Activated T-helper 2 cell treated with anti-CD3 and anti-CD28 coated beads, Interferon-gamma antibody, Interleukin-2, Interleukin-4, amounts not matched to agents 10 μg/mL and 5 μg/mL and 100 μg/mL, durations not matched to agents 14 hours and 24 hours and 36 hours (primary cell): ENCODE measurements at regions of chr11 and their contacts with region 1.

Region 1: DNA sequence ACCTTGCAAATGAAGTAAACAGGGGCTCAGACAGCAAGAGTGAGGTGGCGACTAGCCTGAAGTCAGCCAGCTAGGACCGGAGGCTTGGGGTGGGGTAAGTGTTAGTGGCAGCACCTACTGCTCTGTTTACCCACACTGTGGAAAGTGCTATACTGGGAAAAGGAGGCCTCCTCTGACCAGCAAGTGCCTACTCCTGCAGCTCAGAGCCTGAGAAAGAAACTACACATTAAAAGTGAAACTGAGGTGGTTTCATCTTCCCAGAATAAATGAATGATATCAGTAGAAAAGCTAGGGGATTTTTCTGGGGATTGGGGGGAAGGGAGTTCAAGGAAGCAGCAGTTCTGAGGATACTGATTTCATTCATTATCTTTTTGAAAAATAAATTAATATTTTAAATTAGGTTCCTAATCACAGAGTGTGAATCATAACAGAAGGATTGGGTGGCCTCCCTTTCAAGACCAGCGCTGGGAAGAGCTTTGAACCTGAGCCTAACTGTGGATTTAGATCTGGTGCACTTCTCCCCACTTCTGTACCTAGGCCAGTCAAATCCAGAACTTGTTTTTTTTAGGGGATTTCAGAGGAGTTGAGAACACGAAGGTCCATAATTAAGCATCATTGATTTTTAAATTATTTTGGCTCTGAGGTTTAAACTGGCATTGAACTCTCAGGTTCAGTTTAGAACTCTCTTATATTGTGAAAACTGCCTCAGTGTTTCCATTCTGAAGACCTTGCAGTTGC is 48.1 kb upstream of the GRAMD1B start:
- DNase-seq: peak; percentile 47
- H3K4me3 Mint-ChIP-seq: peak overlapping the region; percentile 59
- H3K27ac Mint-ChIP-seq: peak overlapping the region; percentile 50
- H3K4me1 Mint-ChIP-seq: peaks cover 28% of the 10 kb centered on the region
- H3K27me3 Mint-ChIP-seq: no peaks in the 10 kb centered on the region

Region 2: DNA sequence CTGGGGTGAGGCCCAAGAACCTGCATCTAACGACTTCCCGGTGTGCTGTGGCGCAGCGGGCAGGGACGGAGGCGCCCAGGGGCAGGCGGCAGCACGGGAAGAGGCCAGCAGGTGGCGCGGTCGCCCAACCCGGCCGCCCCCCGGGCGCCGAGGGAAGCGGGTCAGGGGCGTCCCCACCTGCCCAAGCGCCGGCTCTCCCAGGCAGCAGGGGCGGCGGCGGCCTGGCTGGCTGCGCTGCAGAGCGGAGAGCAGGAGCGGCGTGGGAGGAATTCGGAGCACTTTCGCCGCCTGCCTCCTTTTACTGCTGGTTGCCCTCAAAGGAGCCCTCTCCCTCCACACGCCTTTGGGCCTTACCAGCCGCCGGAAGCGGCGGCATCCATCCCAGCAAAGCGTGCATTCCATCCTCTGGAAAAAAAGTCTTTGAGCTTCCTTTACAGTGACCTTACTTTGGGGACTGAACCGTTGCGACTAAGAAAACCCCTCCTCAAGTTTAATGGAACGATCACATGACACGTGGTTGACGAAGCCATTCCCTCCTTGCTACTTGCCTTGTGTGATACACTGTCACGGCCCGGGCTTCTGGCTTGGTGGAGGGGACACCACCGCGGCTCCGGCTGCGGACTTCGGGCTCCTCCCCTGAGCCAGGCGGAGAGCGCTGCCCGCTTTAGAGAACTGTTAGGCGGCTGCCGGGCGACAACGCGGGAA is 80.1 kb before region 1 on chr11:
- intact Hi-C with region 1: loop called (anchors 1 kb)
- DNase-seq: peak; percentile 67
- H3K4me3 Mint-ChIP-seq: peak overlapping the region; percentile 58
- H3K27ac Mint-ChIP-seq: peak overlapping the region; percentile 84
- H3K4me1 Mint-ChIP-seq: peaks cover 45% of the 10 kb centered on the region
- H3K27me3 Mint-ChIP-seq: peaks cover 2% of the 10 kb centered on the region

Region 3: DNA sequence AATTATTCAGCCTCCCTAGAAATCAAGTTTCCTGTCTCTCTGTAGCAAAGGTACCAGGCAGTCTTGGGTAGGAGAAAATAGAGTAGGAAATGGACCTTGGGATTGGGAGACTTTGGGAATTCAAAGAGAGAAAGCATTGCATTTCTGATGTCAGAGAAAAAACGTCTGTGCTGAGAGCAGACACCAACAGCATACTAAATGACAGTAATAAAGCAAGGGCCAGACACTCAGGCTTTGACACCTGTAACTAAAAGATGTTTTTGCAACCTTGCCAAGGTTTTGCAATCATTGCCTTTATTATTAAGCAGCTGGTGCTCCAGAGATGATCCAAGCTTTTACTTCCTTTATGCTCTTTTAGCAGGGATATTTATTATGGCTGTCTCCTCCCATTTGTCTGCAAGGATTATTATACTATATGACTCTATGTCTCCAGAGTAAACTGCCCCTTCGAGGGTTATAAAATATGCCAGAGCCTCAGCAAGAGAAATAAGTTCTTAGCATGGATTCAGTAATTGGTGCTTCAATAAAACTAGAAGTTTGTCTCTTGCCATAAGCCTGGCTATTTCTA is 37.1 kb before region 1 on chr11:
- intact Hi-C with region 1: no loop called
- DNase-seq: no peak
- H3K4me3 Mint-ChIP-seq: no peak overlapping the region
- H3K27ac Mint-ChIP-seq: no peak overlapping the region
- H3K4me1 Mint-ChIP-seq: peaks cover 4% of the 10 kb centered on the region
- H3K27me3 Mint-ChIP-seq: peaks cover 1% of the 10 kb centered on the region

Region 4: DNA sequence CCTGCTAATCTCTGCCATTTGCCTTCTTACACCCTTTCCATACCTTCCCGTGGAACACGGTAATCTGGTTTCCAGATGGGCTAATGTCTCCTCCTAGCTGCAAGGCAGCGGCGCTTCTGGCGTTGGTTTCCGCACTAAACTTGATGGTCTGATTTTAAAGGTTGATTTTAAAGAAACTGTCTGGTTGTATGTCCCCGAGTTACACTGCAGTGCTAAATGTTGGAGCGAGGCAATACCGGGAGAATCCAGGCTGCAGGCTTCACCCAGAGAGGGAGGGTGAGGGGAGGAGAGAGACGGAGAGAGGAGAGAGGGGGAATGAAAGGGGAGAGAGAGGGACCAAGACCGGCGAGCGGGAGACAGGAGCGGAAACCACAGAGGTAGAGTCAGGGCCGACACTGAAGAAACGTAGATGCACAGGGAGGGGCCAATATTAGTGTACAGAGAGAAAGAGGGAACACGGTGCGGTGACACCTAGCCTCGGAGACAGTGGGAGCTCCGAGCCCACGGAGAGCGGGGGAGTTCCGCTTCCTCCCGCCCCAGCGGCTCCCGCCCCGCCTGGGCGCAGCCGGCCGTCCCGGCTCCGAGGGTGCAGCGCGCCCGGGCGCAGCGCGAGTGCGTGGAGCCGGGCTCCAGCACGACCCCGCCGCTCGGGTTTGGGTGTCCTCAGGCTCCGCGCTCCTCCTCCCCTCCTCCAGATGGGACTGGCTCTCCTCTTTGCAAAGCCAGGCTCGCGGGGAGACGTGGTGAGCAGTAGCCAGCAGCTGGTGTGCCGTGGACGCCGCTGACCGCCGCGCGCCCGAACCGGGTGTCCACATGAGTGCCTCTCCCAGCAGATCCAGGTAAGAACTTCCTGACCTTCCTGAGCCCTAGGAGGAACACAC is 23.8 kb before region 1 on chr11:
- intact Hi-C with region 1: loop called (anchors 1 kb)
- DNase-seq: peak; percentile 43
- H3K4me3 Mint-ChIP-seq: peak overlapping the region; percentile 96
- H3K27ac Mint-ChIP-seq: peak overlapping the region; percentile 76
- H3K4me1 Mint-ChIP-seq: peaks cover 51% of the 10 kb centered on the region
- H3K27me3 Mint-ChIP-seq: peaks cover 1% of the 10 kb centered on the region

Region 5: GRCh38 chr11:123407130-123407995 is 25.4 kb after region 1 on chr11:
- intact Hi-C with region 1: loop called (anchors 1 kb)
- DNase-seq: peak; percentile 30
- H3K4me3 Mint-ChIP-seq: peak overlapping the region; percentile 66
- H3K27ac Mint-ChIP-seq: peak overlapping the region; percentile 56
- H3K4me1 Mint-ChIP-seq: peaks cover 43% of the 10 kb centered on the region
- H3K27me3 Mint-ChIP-seq: no peaks in the 10 kb centered on the region

Region 6: GRCh38 chr11:123438191-123438627 is 56.2 kb after region 1 on chr11:
- intact Hi-C with region 1: loop called (anchors 1 kb)
- DNase-seq: no peak
- H3K4me3 Mint-ChIP-seq: peak overlapping the region; percentile 42
- H3K27ac Mint-ChIP-seq: peak overlapping the region; percentile 79
- H3K4me1 Mint-ChIP-seq: peaks cover 81% of the 10 kb centered on the region
- H3K27me3 Mint-ChIP-seq: no peaks in the 10 kb centered on the region

Region 7: DNA sequence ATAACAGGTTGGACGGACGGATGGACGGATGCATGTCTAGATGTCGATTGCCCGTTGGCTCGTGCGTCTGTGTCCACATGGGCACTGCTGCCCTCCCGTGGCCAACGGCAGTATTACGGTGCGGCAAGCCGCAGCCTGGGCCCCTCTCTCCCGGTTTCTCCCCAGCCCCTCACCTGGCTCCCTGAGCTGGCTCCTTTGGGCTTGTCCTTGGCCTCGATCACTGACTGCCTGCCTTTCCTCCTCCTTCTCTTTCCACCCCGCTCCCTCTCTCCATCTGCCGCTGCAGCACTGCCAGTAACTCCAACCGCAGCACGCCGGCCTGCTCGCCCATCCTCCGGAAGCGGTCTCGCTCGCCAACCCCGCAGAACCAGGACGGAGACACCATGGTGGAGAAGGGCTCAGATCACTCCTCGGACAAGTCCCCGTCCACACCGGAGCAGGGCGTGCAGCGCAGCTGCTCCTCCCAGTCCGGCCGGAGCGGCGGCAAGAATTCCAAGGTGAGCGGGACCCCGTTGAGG is 195.2 kb after region 1 on chr11:
- intact Hi-C with region 1: no loop called
- DNase-seq: peak; percentile 27
- H3K4me3 Mint-ChIP-seq: no peak overlapping the region
- H3K27ac Mint-ChIP-seq: no peak overlapping the region
- H3K4me1 Mint-ChIP-seq: peaks cover 13% of the 10 kb centered on the region
- H3K27me3 Mint-ChIP-seq: no peaks in the 10 kb centered on the region